Right cardiac atrium (tissue), 5 donors: ENCODE measurements at regions of chr11 and their contacts with region 1.

Region 1: DNA sequence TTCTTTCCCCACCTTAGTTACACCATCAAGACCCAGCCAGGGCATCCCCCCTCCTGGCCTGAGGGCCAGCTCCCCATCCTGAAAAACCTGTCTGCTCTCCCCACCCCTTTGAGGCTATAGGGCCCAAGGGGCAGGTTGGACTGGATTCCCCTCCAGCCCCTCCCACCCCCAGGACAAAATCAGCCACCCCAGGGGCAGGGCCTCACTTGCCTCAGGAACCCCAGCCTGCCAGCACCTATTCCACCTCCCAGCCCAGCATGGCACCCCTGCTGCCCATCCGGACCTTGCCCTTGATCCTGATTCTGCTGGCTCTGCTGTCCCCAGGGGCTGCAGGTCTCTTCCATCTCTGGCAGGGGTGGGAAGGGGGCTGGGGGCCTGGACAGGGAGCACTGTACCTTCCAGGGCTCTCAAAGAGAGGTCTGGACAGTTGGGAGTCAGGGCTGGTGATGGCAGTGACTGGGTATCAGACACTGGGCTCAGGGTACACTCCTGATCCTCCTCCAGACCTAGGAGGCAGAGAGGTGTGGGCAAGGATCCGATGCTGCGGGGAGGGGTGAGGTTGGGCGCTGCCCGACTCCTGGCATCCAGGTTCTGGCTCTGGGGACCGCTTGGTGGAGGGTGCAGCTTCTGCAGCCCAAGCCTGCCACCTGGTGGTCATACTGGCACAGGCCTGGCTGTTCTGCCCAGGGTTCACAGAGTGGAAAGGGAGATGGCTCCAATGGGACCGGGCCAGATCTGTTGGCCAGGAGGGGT is at the start of gene UPK2:
- DNase-seq: peak; percentile 88 to 96 (median 95)
- ATAC-seq: peak; percentile 95 to 96
- H3K4me3 ChIP-seq: no peak within 1 kb of the TSS
- H3K27ac ChIP-seq: no peak within 1 kb of the TSS
- H3K4me1 ChIP-seq: no peaks in the 10 kb centered on the region
- H3K27me3 ChIP-seq: no peaks in the 10 kb centered on the region
- total RNA-seq, gene UPK2: not detected

Region 2: GRCh38 chr11:118689851-118690552 is 266.3 kb before region 1 on chr11:
- intact Hi-C with region 1: loop called (anchors 5 to 10 kb)
- DNase-seq: peak; percentile 85 to 99 (median 99)
- ATAC-seq: peak; percentile 95 to 97
- H3K4me3 ChIP-seq: no peak overlapping the region
- H3K27ac ChIP-seq: no peak overlapping the region
- H3K4me1 ChIP-seq: no peaks in the 10 kb centered on the region
- H3K27me3 ChIP-seq: no peaks in the 10 kb centered on the region

Region 3: GRCh38 chr11:118807800-118808778 is 148.2 kb before region 1 on chr11:
- intact Hi-C with region 1: no loop called
- DNase-seq: no peak
- ATAC-seq: no peak
- H3K4me3 ChIP-seq: no peak overlapping the region
- H3K27ac ChIP-seq: no peak overlapping the region
- H3K4me1 ChIP-seq: no peaks in the 10 kb centered on the region
- H3K27me3 ChIP-seq: no peaks in the 10 kb centered on the region

Region 4: GRCh38 chr11:118889781-118890180 is 66.5 kb before region 1 on chr11:
- intact Hi-C with region 1: no loop called
- DNase-seq: peak; percentile 89 to 93 (median 93)
- ATAC-seq: peak; percentile 85 to 92
- H3K4me3 ChIP-seq: no peak overlapping the region
- H3K27ac ChIP-seq: peak overlapping the region; percentile 38
- H3K4me1 ChIP-seq: peaks cover 18% of the 10 kb centered on the region
- H3K27me3 ChIP-seq: no peaks in the 10 kb centered on the region

Region 5: GRCh38 chr11:119018074-119018938 is 62.0 kb after region 1 on chr11 and contains the starts of genes RPS25 and TRAPPC4:
- intact Hi-C with region 1: no loop called
- DNase-seq: peak; percentile 96 to 98 (median 97)
- ATAC-seq: peak; percentile 96 to 97
- H3K4me3 ChIP-seq: peak within 1 kb of the TSS; percentile 81
- H3K27ac ChIP-seq: peak within 1 kb of the TSS; percentile 95
- H3K4me1 ChIP-seq: peaks cover 5% of the 10 kb centered on the region
- H3K27me3 ChIP-seq: no peaks in the 10 kb centered on the region
- total RNA-seq, gene RPS25: 750 to 919 (median 877) TPM
- total RNA-seq, gene TRAPPC4: 32.2 to 44.6 (median 36.8) TPM